Heart right ventricle (tissue), 16 donors: ENCODE measurements at regions of chr1 and their contacts with region 1.

Region 1: GRCh38 chr1:115647507-115647906 is 5.7 kb downstream of the VANGL1 start:
- DNase-seq: no peak
- ATAC-seq: no peak
- H3K4me3 ChIP-seq: no peak overlapping the region
- H3K27ac ChIP-seq: no peak overlapping the region
- H3K4me1 ChIP-seq: peaks cover 0 to 80% (median 47%) of the 10 kb centered on the region in 9 donors
- H3K27me3 ChIP-seq: no peaks in the 10 kb centered on the region
- CTCF ChIP-seq: no peak

Region 2: DNA sequence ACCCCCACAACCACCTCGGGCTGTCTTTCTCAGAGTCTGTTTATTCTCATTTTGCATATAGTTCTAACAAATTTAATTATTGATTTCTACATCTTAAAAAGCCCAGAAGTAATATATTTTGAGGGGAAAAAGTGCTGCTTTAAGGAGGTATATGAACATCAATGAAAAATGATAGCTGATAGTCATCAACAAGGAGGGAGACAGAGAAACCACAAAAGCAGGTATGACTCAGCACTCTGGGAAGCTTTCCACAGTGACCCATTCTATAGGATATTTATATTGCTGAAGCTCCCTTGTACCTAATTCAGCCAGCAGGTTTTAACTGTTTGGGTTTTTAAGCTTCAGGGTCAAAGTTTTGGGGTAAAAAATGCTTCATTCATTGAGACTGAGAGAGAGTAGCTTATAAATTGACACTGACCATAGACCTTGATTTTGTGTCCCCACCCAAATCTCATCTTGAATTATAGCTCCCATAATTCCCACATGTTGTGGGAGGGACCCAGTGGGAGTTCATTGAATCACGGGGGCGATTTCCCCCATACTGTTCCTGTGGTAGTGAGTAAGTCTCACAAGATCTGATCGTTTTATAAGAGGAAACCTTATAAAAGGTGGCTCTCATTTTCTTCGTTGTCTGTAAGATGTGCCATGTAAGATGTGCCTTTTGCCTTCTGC is 21.6 kb after region 1 on chr1:
- intact Hi-C with region 1: loop called in 1 of 10 experiments (anchors 2 kb)
- DNase-seq: no peak
- ATAC-seq: no peak
- H3K4me3 ChIP-seq: no peak overlapping the region
- H3K27ac ChIP-seq: peak overlapping the region in 1 of 10 donors; percentile 88
- H3K4me1 ChIP-seq: peaks cover 0 to 72% (median 24%) of the 10 kb centered on the region in 9 donors
- H3K27me3 ChIP-seq: no peaks in the 10 kb centered on the region
- CTCF ChIP-seq: no peak